ENCODE measurements at regions of chr2 and their contacts with region 1.

Region 1: DNA sequence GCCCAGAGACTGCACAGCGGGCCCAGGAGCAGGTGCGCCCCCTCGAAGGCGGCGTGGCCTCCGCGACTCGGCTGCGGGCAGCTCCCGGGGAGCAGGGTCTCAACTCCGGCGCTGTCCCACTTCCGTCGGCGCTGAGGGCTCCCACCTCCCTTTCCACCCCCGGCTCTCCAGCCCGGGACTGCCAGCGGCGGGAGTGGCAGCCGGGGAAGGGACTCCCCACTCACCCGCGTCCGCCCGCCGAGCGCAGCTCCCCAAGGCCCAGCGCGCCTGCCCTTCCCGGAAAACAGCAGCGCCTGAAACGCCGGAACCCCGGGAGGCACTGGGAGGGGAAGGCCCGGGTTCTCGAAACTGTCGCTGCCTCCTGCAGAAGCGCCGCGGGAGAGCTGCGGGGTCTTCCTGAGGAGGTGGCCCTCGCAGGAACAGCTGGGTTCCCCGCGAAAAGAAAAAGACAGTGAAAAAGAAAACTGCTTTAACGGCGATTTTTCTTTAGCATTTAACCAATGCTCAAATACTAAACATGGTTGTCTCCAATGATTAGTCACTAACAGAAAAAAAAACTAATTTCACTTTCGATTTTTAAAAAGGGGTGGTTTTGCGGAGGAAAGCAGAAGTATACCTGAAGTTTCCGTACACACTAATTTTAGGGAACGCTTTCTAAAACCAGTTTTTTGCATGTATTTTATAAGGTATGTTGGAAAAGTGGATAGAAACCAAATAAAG is at the start of gene NMI:
- DNase-seq: peak; percentile 84
- H3K4me3 ChIP-seq: peak within 1 kb of the TSS; percentile 67 to 82 (median 72)
- H3K27ac ChIP-seq: peak within 1 kb of the TSS; percentile 89 to 98 (median 93)
- H3K4me1 ChIP-seq: peaks cover 0 to 26% (median 20%) of the 10 kb centered on the region in 4 donors
- H3K27me3 ChIP-seq: no peaks in the 10 kb centered on the region
- CTCF ChIP-seq: no peak
- EP300 ChIP-seq: no peak
- POLR2A ChIP-seq: no peak
- total RNA-seq, gene NMI: 11.5 to 19.9 (median 16.4) TPM

Region 2: GRCh38 chr2:151261231-151261976 is 28.1 kb before region 1 on chr2 and contains the start of gene RBM43:
- intact Hi-C with region 1: loop called (anchors 1 kb)
- DNase-seq: peak; percentile 95
- H3K4me3 ChIP-seq: peak within 1 kb of the TSS; percentile 82 to 96 (median 90)
- H3K27ac ChIP-seq: peak within 1 kb of the TSS; percentile 93 to 99 (median 97)
- H3K4me1 ChIP-seq: peaks cover 0 to 28% (median 10%) of the 10 kb centered on the region in 4 donors
- H3K27me3 ChIP-seq: no peaks in the 10 kb centered on the region
- CTCF ChIP-seq: no peak
- EP300 ChIP-seq: no peak
- POLR2A ChIP-seq: peak; percentile 23 to 43
- total RNA-seq, gene RBM43: 8.6 to 16.9 (median 10.4) TPM

Region 3: DNA sequence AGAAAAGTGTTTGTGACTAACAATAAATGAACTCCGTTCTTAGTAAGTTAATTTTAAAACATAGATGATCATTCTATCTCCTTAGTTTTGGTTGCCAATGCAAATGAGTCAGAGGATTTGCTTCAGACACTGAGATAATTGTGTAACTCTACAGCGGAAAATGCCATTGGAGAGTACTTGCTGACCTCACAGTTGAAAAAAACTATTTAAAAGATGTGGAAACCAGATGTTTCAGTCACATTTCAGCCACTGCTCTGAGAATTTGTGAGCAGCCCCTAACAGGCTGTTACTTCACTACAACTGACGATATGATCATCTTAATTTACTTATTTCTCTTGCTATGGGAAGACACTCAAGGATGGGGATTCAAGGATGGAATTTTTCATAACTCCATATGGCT is 67.8 kb after region 1 on chr2 and contains the start of gene TNFAIP6:
- intact Hi-C with region 1: loop called (anchors 5 kb)
- DNase-seq: no peak
- H3K4me3 ChIP-seq: peak within 1 kb of the TSS in 2 of 4 donors; percentile 19 to 21
- H3K27ac ChIP-seq: peak within 1 kb of the TSS; percentile 30 to 52 (median 48)
- H3K4me1 ChIP-seq: no peaks in the 10 kb centered on the region
- H3K27me3 ChIP-seq: no peaks in the 10 kb centered on the region
- CTCF ChIP-seq: no peak
- EP300 ChIP-seq: no peak
- POLR2A ChIP-seq: peak; percentile 25 to 27
- total RNA-seq, gene TNFAIP6: 3.6 to 4.9 (median 4.0) TPM

Region 4: GRCh38 chr2:151409601-151410484 is 120.3 kb after region 1 on chr2 and contains the start of gene RIF1:
- intact Hi-C with region 1: loop called (anchors 1 kb)
- DNase-seq: peak; percentile 94
- H3K4me3 ChIP-seq: peak within 1 kb of the TSS; percentile 68 to 98 (median 92)
- H3K27ac ChIP-seq: peak within 1 kb of the TSS; percentile 87 to 94 (median 91)
- H3K4me1 ChIP-seq: peaks cover 0 to 23% (median 17%) of the 10 kb centered on the region in 4 donors
- H3K27me3 ChIP-seq: no peaks in the 10 kb centered on the region
- CTCF ChIP-seq: peak; percentile 66 to 91 (median 78)
- EP300 ChIP-seq: no peak
- POLR2A ChIP-seq: no peak
- total RNA-seq, gene RIF1: 31.3 to 38.2 (median 32.9) TPM

Measured in sigmoid colon (tissue), 7 donors.